Heart right ventricle (tissue), 16 donors: ENCODE measurements at regions of chr16 and their contacts with region 1.

Region 1: GRCh38 chr16:85027349-85027957 is at the start of gene KIAA0513:
- DNase-seq: peak; percentile 93 to 96
- ATAC-seq: peak; percentile 89 to 94 (median 91)
- H3K4me3 ChIP-seq: peak within 1 kb of the TSS; percentile 59 to 88 (median 83)
- H3K27ac ChIP-seq: peak within 1 kb of the TSS; percentile 54 to 96 (median 81)
- H3K4me1 ChIP-seq: peaks cover 5 to 48% (median 30%) of the 10 kb centered on the region in 9 donors
- H3K27me3 ChIP-seq: no peaks in the 10 kb centered on the region
- CTCF ChIP-seq: peak in 7 of 9 donors; percentile 10 to 58 (median 25)
- total RNA-seq, gene KIAA0513: 5.9 to 10.9 (median 8.5) TPM

Region 2: GRCh38 chr16:84647828-84648594 is 379.4 kb before region 1 on chr16 and contains the start of gene KLHL36:
- intact Hi-C with region 1: no loop called
- DNase-seq: peak; percentile 51 to 77
- ATAC-seq: peak; percentile 51 to 89 (median 68)
- H3K4me3 ChIP-seq: peak within 1 kb of the TSS; percentile 55 to 100 (median 81)
- H3K27ac ChIP-seq: peak within 1 kb of the TSS; percentile 88 to 97 (median 92)
- H3K4me1 ChIP-seq: peaks cover 2 to 40% (median 31%) of the 10 kb centered on the region in 9 donors
- H3K27me3 ChIP-seq: no peaks in the 10 kb centered on the region
- CTCF ChIP-seq: peak in 2 of 9 donors; percentile 8 to 22
- total RNA-seq, gene KLHL36: 40.0 to 77.9 (median 58.4) TPM

Region 3: GRCh38 chr16:84940670-84941551 is 86.5 kb before region 1 on chr16:
- intact Hi-C with region 1: no loop called
- DNase-seq: no peak
- ATAC-seq: peak in 6 of 8 donors; percentile 25 to 72 (median 39)
- H3K4me3 ChIP-seq: no peak overlapping the region
- H3K27ac ChIP-seq: no peak overlapping the region
- H3K4me1 ChIP-seq: peaks cover 0 to 3% (median 0%) of the 10 kb centered on the region in 9 donors
- H3K27me3 ChIP-seq: peaks cover 0 to 7% (median 0%) of the 10 kb centered on the region in 7 donors
- CTCF ChIP-seq: peak in 1 of 9 donors; percentile 3

Region 4: GRCh38 chr16:85010931-85011845 is 16.3 kb before region 1 on chr16 and contains the start of gene ZDHHC7:
- intact Hi-C with region 1: loop called in 1 of 10 experiments (anchors 2 kb)
- DNase-seq: peak; percentile 88 to 91
- ATAC-seq: peak; percentile 94 to 98 (median 96)
- H3K4me3 ChIP-seq: peak within 1 kb of the TSS; percentile 65 to 98 (median 86)
- H3K27ac ChIP-seq: peak within 1 kb of the TSS; percentile 89 to 99 (median 98)
- H3K4me1 ChIP-seq: peaks cover 0 to 73% (median 35%) of the 10 kb centered on the region in 9 donors
- H3K27me3 ChIP-seq: no peaks in the 10 kb centered on the region
- CTCF ChIP-seq: peak in 3 of 9 donors; percentile 6 to 24 (median 13)
- total RNA-seq, gene ZDHHC7: 36.2 to 55.5 (median 43.2) TPM

Region 5: GRCh38 chr16:86227801-86228200 is 1200.3 kb after region 1 on chr16:
- intact Hi-C with region 1: no loop called
- DNase-seq: no peak
- ATAC-seq: no peak
- H3K4me3 ChIP-seq: no peak overlapping the region
- H3K27ac ChIP-seq: no peak overlapping the region
- H3K4me1 ChIP-seq: peaks cover 0 to 7% (median 0%) of the 10 kb centered on the region in 9 donors
- H3K27me3 ChIP-seq: peaks cover 0 to 85% (median 42%) of the 10 kb centered on the region in 7 donors
- CTCF ChIP-seq: no peak